Ascending aorta (tissue), 2 donors: ENCODE measurements at regions of chr14 and their contacts with region 1.

Region 1: GRCh38 chr14:71138448-71139293 is 231.4 kb downstream of the PCNX1 start:
- DNase-seq: no peak
- H3K4me3 ChIP-seq: no peak overlapping the region
- H3K27ac ChIP-seq: no peak overlapping the region
- H3K4me1 ChIP-seq: no peaks in the 10 kb centered on the region
- H3K27me3 ChIP-seq: no peaks in the 10 kb centered on the region
- CTCF ChIP-seq: peak; percentile 82 to 97 (median 95)

Region 2: GRCh38 chr14:70425354-70425753 is 713.3 kb before region 1 on chr14:
- intact Hi-C with region 1: no loop called
- DNase-seq: no peak
- H3K4me3 ChIP-seq: no peak overlapping the region
- H3K27ac ChIP-seq: no peak overlapping the region
- H3K4me1 ChIP-seq: no peaks in the 10 kb centered on the region
- H3K27me3 ChIP-seq: no peaks in the 10 kb centered on the region
- CTCF ChIP-seq: no peak

Region 3: DNA sequence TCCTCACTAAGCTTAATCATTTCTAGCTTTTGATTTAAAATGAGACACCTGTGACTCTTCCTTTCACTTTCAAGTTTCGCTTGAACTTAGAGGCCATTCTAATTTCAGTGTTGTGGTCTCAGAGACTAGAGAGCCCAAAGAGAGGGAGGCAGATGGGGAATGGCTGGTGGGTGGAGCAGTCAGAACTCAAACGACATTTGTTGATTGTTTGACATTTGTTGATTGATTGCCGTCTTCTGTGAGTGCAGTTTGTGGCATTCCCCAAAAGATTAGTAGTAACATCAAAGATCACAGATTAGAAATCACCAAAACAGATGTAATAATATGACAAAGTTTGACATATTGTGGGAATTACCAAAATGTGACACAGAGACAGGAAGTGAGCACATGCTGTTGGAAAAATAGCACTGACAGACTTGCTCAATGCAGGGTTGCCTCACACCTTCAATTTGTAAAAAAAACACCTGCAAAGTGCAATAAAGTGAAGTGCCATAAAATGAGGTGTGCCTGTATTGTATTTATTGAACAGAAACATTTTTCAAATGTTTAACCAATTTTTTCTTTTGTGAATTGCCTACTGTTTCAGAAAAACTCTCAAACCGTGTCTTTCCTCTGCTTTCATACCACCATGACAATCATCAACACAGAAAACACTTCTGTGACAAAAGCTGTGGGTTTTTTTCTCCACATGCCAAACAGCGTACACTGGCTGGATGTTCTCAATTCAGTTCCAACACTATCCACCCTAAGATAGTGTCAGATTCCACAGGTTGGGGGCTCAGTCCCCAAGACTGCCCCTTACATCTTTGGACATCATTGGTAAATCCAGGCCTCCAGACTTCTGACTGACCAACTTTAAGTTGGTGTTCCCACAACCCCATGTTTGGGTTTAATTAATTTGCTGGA is 417.2 kb after region 1 on chr14:
- intact Hi-C with region 1: no loop called
- DNase-seq: no peak
- H3K4me3 ChIP-seq: no peak overlapping the region
- H3K27ac ChIP-seq: peak overlapping the region; percentile 32 to 36
- H3K4me1 ChIP-seq: peaks cover 0 to 6% of the 10 kb centered on the region in 2 donors
- H3K27me3 ChIP-seq: no peaks in the 10 kb centered on the region
- CTCF ChIP-seq: no peak

Region 4: GRCh38 chr14:71753126-71753830 is 614.6 kb after region 1 on chr14:
- intact Hi-C with region 1: loop called (anchors 1 kb)
- DNase-seq: peak; percentile 29 to 92
- H3K4me3 ChIP-seq: peak overlapping the region in 1 of 2 donors; percentile 44
- H3K27ac ChIP-seq: no peak overlapping the region
- H3K4me1 ChIP-seq: peaks cover 0 to 3% of the 10 kb centered on the region in 2 donors
- H3K27me3 ChIP-seq: no peaks in the 10 kb centered on the region
- CTCF ChIP-seq: peak; percentile 89 to 96 (median 92)

Region 5: DNA sequence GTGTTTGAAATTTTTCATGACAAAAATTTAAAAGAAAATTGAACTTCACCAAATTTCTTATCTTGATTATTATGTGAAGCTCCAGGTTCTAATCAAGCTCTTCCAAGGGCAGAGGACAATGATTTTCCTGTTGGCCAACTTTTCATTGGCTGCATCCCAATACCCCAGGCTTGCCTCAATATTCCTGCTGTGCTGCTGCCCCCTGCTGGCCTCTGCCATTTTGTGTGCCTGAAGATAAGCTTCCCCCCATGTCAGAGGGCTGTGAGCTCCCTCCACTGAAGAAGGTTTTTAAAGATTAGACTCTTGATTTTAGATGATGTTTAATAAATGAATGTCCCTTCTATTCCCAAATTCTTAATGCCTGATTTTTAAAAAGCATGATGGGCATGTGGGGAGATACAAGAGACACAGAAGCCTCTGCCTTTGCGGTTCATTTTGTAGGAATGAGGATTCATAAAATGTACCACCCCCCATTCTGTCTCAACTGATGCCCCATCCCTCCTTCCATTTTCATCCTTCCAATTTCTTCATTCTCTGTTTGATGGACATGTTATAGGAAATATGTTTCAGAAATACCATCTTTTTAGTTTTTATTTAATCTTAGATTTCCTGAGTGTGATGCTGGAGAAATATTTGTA is 716.8 kb after region 1 on chr14:
- intact Hi-C with region 1: loop called (anchors 2 kb)
- DNase-seq: peak in 1 of 2 donors; percentile 75
- H3K4me3 ChIP-seq: no peak overlapping the region
- H3K27ac ChIP-seq: no peak overlapping the region
- H3K4me1 ChIP-seq: no peaks in the 10 kb centered on the region
- H3K27me3 ChIP-seq: no peaks in the 10 kb centered on the region
- CTCF ChIP-seq: peak; percentile 22 to 56 (median 38)